ENCODE measurements at regions of chr1 and their contacts with region 1.

Region 1: GRCh38 chr1:184743062-184743756 is 11.4 kb downstream of the EDEM3 start:
- DNase-seq: peak; percentile 18
- H3K4me3 Mint-ChIP-seq: no peak overlapping the region
- H3K27ac Mint-ChIP-seq: peak overlapping the region; percentile 43
- H3K4me1 Mint-ChIP-seq: peaks cover 53% of the 10 kb centered on the region
- H3K27me3 Mint-ChIP-seq: no peaks in the 10 kb centered on the region

Region 2: GRCh38 chr1:184771190-184771691 is 28.0 kb after region 1 on chr1:
- CTCF ChIA-PET with region 1: no interaction called
- intact Hi-C with region 1: no loop called
- DNase-seq: no peak
- H3K4me3 Mint-ChIP-seq: no peak overlapping the region
- H3K27ac Mint-ChIP-seq: no peak overlapping the region
- H3K4me1 Mint-ChIP-seq: no peaks in the 10 kb centered on the region
- H3K27me3 Mint-ChIP-seq: no peaks in the 10 kb centered on the region

Region 3: DNA sequence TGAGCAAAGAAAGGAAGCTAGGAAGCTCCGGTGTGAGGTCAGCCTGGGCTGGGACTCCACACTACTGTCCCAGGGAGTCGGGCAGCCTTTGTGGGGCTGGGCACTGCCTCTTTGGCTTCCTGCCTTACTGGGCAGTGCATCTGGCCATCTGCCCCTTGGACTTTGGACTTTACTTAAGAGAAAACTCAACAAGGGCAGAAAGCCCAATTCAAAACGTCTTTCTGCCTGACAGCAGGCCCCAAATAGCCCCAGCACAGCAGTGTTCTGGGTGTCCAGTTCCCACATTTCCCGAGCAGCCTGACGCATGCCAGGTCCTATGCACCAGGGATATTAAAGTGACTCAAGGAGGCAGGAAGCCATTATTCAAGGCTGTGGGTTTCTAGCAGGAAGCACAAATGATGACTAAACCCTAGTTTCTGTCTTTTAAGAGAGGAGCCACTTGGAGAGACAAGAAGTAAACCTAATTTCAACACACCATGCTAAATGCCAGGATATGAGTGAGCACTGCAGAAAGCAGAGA is 49.3 kb after region 1 on chr1:
- CTCF ChIA-PET with region 1: no interaction called
- intact Hi-C with region 1: loop called (anchors 1 kb)
- DNase-seq: peak; percentile 39
- H3K4me3 Mint-ChIP-seq: no peak overlapping the region
- H3K27ac Mint-ChIP-seq: no peak overlapping the region
- H3K4me1 Mint-ChIP-seq: peaks cover 11% of the 10 kb centered on the region
- H3K27me3 Mint-ChIP-seq: no peaks in the 10 kb centered on the region